Upper lobe of right lung (tissue), 1 donor: ENCODE measurements at regions of chr1 and their contacts with region 1.

Region 1: DNA sequence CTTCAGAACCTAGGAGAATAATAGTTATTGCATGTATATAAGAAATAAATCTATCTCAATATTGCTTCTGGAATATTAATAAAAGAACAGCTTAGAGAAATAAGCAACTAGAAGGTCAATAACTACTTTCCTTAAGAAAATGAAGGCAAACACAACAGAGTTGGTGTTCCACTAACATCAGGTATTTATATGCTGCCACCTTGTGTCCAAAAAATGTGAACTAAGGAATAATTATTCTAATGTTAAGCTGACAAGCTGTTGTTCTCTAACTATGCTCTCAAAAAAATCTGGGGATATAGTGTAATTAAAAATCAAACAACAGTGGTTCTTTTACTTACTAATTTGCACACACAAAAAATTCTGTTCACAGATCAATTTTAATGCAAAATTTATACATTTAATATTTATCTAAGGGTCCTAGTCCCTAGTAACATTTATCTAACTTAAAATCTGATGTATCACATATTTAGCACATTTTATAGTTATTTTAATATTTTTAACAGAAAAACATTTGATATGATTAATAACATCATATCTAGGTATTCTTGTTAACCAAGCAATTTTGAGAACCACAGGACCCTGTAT is 39.6 kb downstream of the UCHL5 start:
- DNase-seq: no peak
- ATAC-seq: peak; percentile 74
- H3K4me3 ChIP-seq: no peak overlapping the region
- H3K27ac ChIP-seq: no peak overlapping the region
- H3K4me1 ChIP-seq: no peaks in the 10 kb centered on the region
- H3K27me3 ChIP-seq: no peaks in the 10 kb centered on the region
- CTCF ChIP-seq: peak; percentile 53

Region 2: DNA sequence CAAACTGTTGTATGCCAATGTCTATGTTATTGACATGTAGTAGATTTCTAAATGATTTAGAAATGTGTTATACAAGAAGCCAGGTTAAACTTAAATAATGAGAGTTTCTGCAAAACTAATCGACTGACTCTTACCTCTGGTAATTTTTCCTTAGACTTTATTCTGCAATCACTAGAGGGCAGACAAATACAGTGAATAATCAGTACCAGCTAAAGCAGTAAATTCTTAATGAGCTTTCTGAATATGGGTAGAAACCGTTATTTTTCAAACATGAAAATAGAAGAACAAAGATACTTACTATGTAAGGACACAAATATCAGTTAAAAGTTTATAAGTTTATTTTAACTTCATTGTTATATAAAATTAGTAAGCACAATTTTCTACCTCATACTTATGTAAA is 541.9 kb before region 1 on chr1:
- intact Hi-C with region 1: loop called (anchors 10 kb)
- DNase-seq: no peak
- ATAC-seq: peak; percentile 60
- H3K4me3 ChIP-seq: no peak overlapping the region
- H3K27ac ChIP-seq: no peak overlapping the region
- H3K4me1 ChIP-seq: no peaks in the 10 kb centered on the region
- H3K27me3 ChIP-seq: peaks cover 3% of the 10 kb centered on the region
- CTCF ChIP-seq: peak; percentile 58

Region 3: GRCh38 chr1:192732787-192733186 is 286.7 kb before region 1 on chr1:
- intact Hi-C with region 1: no loop called
- DNase-seq: no peak
- ATAC-seq: no peak
- H3K4me3 ChIP-seq: no peak overlapping the region
- H3K27ac ChIP-seq: no peak overlapping the region
- H3K4me1 ChIP-seq: no peaks in the 10 kb centered on the region
- H3K27me3 ChIP-seq: no peaks in the 10 kb centered on the region
- CTCF ChIP-seq: no peak

Region 4: GRCh38 chr1:193069748-193070385 is 50.3 kb after region 1 on chr1:
- intact Hi-C with region 1: no loop called
- DNase-seq: no peak
- ATAC-seq: no peak
- H3K4me3 ChIP-seq: no peak overlapping the region
- H3K27ac ChIP-seq: no peak overlapping the region
- H3K4me1 ChIP-seq: no peaks in the 10 kb centered on the region
- H3K27me3 ChIP-seq: no peaks in the 10 kb centered on the region
- CTCF ChIP-seq: no peak

Region 5: GRCh38 chr1:193143285-193143684 is 123.8 kb after region 1 on chr1:
- intact Hi-C with region 1: no loop called
- DNase-seq: no peak
- ATAC-seq: no peak
- H3K4me3 ChIP-seq: no peak overlapping the region
- H3K27ac ChIP-seq: no peak overlapping the region
- H3K4me1 ChIP-seq: no peaks in the 10 kb centered on the region
- H3K27me3 ChIP-seq: no peaks in the 10 kb centered on the region
- CTCF ChIP-seq: peak; percentile 44